ENCODE measurements at regions of chr20 and their contacts with region 1.

Region 1: GRCh38 chr20:53262294-53262859 is 290.2 kb downstream of the TSHZ2 start:
- DNase-seq: no peak
- ATAC-seq: no peak
- H3K4me3 ChIP-seq: no peak overlapping the region
- H3K4me3 Mint-ChIP-seq: no peak overlapping the region
- H3K27ac ChIP-seq: no peak overlapping the region
- H3K27ac Mint-ChIP-seq: no peak overlapping the region
- H3K4me1 ChIP-seq: no peaks in the 10 kb centered on the region
- H3K4me1 Mint-ChIP-seq: no peaks in the 10 kb centered on the region
- H3K27me3 ChIP-seq: peaks cover 0 to 11% of the 10 kb centered on the region in 2 experiments
- H3K27me3 Mint-ChIP-seq: no peaks in the 10 kb centered on the region

Region 2: GRCh38 chr20:53302695-53303412 is 40.5 kb after region 1 on chr20:
- CTCF ChIA-PET with region 1: no interaction called
- POLR2A ChIA-PET with region 1: no interaction called
- DNase-seq: no peak
- ATAC-seq: no peak
- H3K4me3 ChIP-seq: no peak overlapping the region
- H3K4me3 Mint-ChIP-seq: no peak overlapping the region
- H3K27ac ChIP-seq: no peak overlapping the region
- H3K27ac Mint-ChIP-seq: no peak overlapping the region
- H3K4me1 ChIP-seq: no peaks in the 10 kb centered on the region
- H3K4me1 Mint-ChIP-seq: no peaks in the 10 kb centered on the region
- H3K27me3 ChIP-seq: peaks cover 0 to 4% of the 10 kb centered on the region in 2 experiments
- H3K27me3 Mint-ChIP-seq: peaks cover 4 to 11% of the 10 kb centered on the region in 2 donors

Region 3: DNA sequence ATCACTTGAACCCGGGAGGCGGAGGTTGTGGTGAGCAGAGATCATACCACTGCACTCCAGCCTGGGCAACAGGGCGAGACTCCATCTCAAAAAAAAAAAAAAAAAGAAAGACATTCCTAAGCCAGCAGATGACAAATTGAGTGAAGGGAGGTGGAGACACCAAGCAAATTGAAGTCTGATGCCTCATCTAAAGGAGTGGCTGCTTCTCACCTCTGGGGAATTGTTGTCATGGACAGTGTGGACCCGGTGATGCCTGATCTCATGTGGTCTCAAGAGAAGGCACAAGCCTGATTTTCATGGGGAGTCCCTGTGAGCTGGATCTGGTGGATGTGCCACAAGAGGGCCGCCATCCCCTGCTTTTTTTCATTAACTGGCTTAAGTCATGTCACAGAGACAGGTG is 59.2 kb after region 1 on chr20:
- CTCF ChIA-PET with region 1: interaction called in 1 of 2 experiments, 15 read pairs
- POLR2A ChIA-PET with region 1: no interaction called
- DNase-seq: no peak
- ATAC-seq: no peak
- H3K4me3 ChIP-seq: no peak overlapping the region
- H3K4me3 Mint-ChIP-seq: no peak overlapping the region
- H3K27ac ChIP-seq: no peak overlapping the region
- H3K27ac Mint-ChIP-seq: no peak overlapping the region
- H3K4me1 ChIP-seq: peaks cover 0 to 15% of the 10 kb centered on the region in 2 experiments
- H3K4me1 Mint-ChIP-seq: peaks cover 23 to 29% (median 24%) of the 10 kb centered on the region in 3 donors
- H3K27me3 ChIP-seq: peaks cover 0 to 9% of the 10 kb centered on the region in 2 experiments
- H3K27me3 Mint-ChIP-seq: no peaks in the 10 kb centered on the region

Measured in T-cell (primary cell).